Adrenal gland (tissue), 19 donors: ENCODE measurements at regions of chr15 and their contacts with region 1.

Region 1: GRCh38 chr15:74950078-74951000 is 6.2 kb downstream of the RPP25 start:
- DNase-seq: peak; percentile 66 to 95 (median 81)
- H3K4me3 ChIP-seq: no peak overlapping the region
- H3K27ac ChIP-seq: no peak overlapping the region
- H3K4me1 ChIP-seq: peaks cover 12 to 22% of the 10 kb centered on the region in 2 donors
- H3K27me3 ChIP-seq: no peaks in the 10 kb centered on the region
- CTCF ChIP-seq: peak; percentile 97 to 100 (median 99)
- POLR2A ChIP-seq: no peak

Region 2: GRCh38 chr15:74525946-74526345 is 424.4 kb before region 1 on chr15:
- intact Hi-C with region 1: loop called in 1 of 2 experiments (anchors 10 kb)
- DNase-seq: no peak
- H3K4me3 ChIP-seq: no peak overlapping the region
- H3K27ac ChIP-seq: no peak overlapping the region
- H3K4me1 ChIP-seq: no peaks in the 10 kb centered on the region
- H3K27me3 ChIP-seq: no peaks in the 10 kb centered on the region
- CTCF ChIP-seq: no peak
- POLR2A ChIP-seq: no peak

Region 3: DNA sequence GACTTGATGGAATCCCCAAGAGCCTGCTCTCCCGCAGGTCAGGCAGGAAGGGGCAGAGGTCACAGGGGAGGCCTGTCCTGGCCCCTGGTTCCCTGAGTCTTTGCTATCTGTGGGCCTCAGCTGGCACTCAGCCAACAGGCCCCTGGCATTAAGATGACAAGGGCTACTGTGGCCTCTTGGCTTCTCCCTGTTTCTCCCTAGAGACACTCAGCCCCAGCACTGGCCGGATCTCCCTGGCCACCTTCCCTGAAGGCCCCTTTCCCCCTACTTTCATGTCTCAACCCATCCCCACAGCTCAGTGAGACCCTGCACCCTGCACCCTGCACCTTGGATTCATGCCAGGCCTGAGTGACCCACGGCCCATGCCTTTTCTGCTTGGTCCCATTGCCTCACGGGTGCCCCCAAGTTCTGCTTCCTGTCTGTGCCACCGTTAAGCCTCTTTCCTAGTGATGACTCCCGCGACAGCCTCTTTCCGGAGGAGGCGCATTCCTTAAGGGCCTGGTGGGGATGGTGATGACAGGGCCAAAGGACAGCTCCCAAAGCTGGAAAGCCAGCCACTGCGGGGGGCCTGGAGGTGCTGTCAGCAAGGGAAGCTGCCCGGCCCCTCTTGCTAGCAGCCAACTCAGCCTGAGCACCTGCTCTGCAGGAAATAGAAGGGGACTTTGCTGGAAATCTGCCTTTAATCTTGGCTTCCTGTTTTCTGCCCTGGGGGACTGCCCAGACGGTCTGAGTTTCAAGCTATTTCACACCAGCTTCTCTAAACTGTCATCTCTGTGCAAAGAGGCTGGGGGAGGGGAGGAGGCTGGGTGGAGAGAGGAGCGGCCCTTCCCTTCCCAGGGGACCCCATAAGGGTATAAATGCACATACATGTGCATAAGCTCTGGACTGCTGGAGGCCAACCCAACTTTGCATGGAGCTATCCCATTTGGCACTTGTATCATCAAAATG is 173.2 kb before region 1 on chr15:
- intact Hi-C with region 1: loop called (anchors 5 kb)
- DNase-seq: no peak
- H3K4me3 ChIP-seq: no peak overlapping the region
- H3K27ac ChIP-seq: peak overlapping the region in 3 of 5 donors; percentile 5 to 64 (median 23)
- H3K4me1 ChIP-seq: peaks cover 6 to 26% of the 10 kb centered on the region in 2 donors
- H3K27me3 ChIP-seq: no peaks in the 10 kb centered on the region
- CTCF ChIP-seq: no peak
- POLR2A ChIP-seq: no peak